Psoas muscle (tissue), 8 donors: ENCODE measurements at regions of chr16 and their contacts with region 1.

Region 1: GRCh38 chr16:79601931-79602627 is 1.5 kb upstream of the MAF start:
- DNase-seq: peak; percentile 78 to 86
- ATAC-seq: peak in 3 of 4 donors; percentile 18 to 48 (median 23)
- H3K4me3 ChIP-seq: peak overlapping the region; percentile 80
- H3K27ac ChIP-seq: peak overlapping the region; percentile 94
- H3K4me1 ChIP-seq: peaks cover 13% of the 10 kb centered on the region
- H3K27me3 ChIP-seq: no peaks in the 10 kb centered on the region
- CTCF ChIP-seq: peak; percentile 79

Region 2: GRCh38 chr16:78503602-78504001 is 1098.5 kb before region 1 on chr16:
- intact Hi-C with region 1: loop called (anchors 5 kb)
- DNase-seq: no peak
- ATAC-seq: peak; percentile 48 to 69 (median 54)
- H3K4me3 ChIP-seq: no peak overlapping the region
- H3K27ac ChIP-seq: no peak overlapping the region
- H3K4me1 ChIP-seq: peaks cover 23% of the 10 kb centered on the region
- H3K27me3 ChIP-seq: no peaks in the 10 kb centered on the region
- CTCF ChIP-seq: peak; percentile 96

Region 3: GRCh38 chr16:78925083-78925767 is 676.9 kb before region 1 on chr16:
- intact Hi-C with region 1: loop called (anchors 5 to 10 kb)
- DNase-seq: peak; percentile 26 to 70
- ATAC-seq: peak; percentile 58 to 74 (median 66)
- H3K4me3 ChIP-seq: no peak overlapping the region
- H3K27ac ChIP-seq: no peak overlapping the region
- H3K4me1 ChIP-seq: no peaks in the 10 kb centered on the region
- H3K27me3 ChIP-seq: no peaks in the 10 kb centered on the region
- CTCF ChIP-seq: peak; percentile 54

Region 4: GRCh38 chr16:79316004-79316458 is 286.0 kb before region 1 on chr16:
- intact Hi-C with region 1: loop called in 1 of 2 experiments (anchors 5 kb)
- DNase-seq: no peak
- ATAC-seq: no peak
- H3K4me3 ChIP-seq: no peak overlapping the region
- H3K27ac ChIP-seq: no peak overlapping the region
- H3K4me1 ChIP-seq: peaks cover 16% of the 10 kb centered on the region
- H3K27me3 ChIP-seq: no peaks in the 10 kb centered on the region
- CTCF ChIP-seq: no peak

Region 5: DNA sequence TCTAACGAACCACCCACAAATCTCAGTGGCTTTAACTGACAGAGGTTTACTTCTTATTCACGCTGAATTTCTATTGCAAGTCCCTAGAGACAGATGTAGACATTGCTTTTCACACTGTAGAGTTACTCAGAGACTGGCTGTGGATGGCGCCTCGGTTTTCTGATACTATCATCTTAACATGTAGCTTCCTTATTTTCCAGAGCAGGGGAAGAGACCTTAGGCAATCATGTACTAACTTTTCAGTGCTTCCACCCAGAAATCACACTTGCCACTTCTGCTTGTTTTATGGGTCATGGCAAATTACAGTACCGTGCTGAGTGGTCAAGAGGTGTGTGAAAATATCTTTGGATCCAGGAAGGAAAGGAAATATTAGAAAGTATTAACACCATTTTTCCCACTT is 66.9 kb before region 1 on chr16:
- intact Hi-C with region 1: loop called in 1 of 2 experiments (anchors 1 kb)
- DNase-seq: no peak
- ATAC-seq: no peak
- H3K4me3 ChIP-seq: no peak overlapping the region
- H3K27ac ChIP-seq: peak overlapping the region; percentile 89
- H3K4me1 ChIP-seq: peaks cover 36% of the 10 kb centered on the region
- H3K27me3 ChIP-seq: no peaks in the 10 kb centered on the region
- CTCF ChIP-seq: no peak

Region 6: DNA sequence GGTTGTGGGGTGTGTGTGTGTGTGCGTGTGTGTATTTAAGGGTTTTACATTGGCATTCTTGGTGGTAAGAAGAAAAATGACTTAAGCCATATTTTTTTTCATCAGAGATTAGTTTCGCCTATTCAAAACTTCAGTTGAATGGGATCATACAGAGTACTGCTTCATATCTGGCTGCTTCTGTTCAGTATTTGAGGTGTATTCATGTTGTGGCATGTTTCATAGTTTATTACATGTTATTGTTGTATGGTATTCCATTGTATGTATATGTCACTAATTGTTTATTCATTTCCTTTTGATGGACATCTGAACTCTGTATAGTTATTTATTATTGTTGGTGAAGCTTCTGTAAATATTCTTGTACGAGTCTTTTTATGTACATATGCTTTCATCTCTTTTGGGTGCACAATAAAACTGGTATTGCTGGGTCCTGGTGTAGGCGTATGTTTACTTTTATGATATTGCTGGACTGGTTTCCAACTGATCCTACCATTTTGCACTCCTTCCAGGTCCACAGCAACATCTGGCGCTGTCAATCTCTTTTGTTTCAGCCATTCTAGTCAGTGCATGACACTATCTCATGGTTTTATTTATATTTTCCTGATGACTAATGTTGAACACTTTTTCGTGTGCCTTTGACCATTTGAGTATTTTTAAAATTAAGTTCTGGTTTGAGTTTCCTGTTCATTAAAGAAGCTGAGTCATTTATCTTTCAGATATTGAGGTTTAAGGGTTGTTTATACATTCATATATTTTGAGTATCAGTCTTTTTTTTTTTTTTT is 75.9 kb after region 1 on chr16:
- intact Hi-C with region 1: no loop called
- DNase-seq: no peak
- ATAC-seq: no peak
- H3K4me3 ChIP-seq: no peak overlapping the region
- H3K27ac ChIP-seq: no peak overlapping the region
- H3K4me1 ChIP-seq: no peaks in the 10 kb centered on the region
- H3K27me3 ChIP-seq: peaks cover 0 to 1% (median 0%) of the 10 kb centered on the region in 3 donors
- CTCF ChIP-seq: no peak

Region 7: DNA sequence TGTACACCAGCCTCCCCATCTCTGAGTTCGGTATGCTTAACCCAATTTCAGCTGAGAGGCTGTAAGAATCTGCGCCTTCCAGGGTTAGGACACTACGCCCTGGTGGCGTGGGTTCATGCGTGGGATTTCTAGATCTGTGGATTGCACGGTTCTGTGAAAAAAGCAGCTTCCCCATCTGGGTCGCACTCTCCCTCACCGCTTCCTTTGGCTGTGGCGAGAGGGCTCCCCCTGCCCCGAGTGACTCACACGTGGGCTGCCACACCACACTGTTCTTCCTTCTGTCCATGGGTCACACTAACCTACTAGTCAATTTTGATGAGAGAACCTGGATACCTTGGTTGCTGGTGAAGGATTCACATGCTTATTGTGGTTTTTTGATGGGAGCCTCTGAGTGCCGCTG is 254.5 kb after region 1 on chr16:
- intact Hi-C with region 1: no loop called
- DNase-seq: no peak
- ATAC-seq: no peak
- H3K4me3 ChIP-seq: no peak overlapping the region
- H3K27ac ChIP-seq: no peak overlapping the region
- H3K4me1 ChIP-seq: no peaks in the 10 kb centered on the region
- H3K27me3 ChIP-seq: no peaks in the 10 kb centered on the region
- CTCF ChIP-seq: no peak

Region 8: DNA sequence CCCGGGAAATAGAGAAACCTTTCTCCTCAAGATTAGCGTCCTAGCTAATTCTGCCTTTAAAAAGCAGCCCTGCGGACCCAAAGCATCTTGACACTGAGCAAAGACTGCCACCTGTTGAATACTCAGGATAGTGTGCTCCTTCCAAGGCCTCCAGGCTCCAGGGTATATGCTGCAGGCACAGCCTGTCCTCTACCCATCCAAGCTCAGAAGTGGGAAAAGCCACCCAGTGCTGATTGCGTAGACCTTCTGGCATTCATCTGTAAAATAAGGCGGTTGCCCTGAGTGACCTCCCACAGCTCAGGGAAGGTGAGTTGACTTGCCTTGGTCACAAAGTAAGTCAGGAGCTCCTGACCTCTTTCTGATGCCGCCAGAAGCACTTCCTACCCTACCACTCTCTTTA is 482.6 kb after region 1 on chr16:
- intact Hi-C with region 1: loop called in 1 of 2 experiments (anchors 5 kb)
- DNase-seq: peak; percentile 13 to 50
- ATAC-seq: peak; percentile 67 to 89 (median 78)
- H3K4me3 ChIP-seq: no peak overlapping the region
- H3K27ac ChIP-seq: no peak overlapping the region
- H3K4me1 ChIP-seq: no peaks in the 10 kb centered on the region
- H3K27me3 ChIP-seq: no peaks in the 10 kb centered on the region
- CTCF ChIP-seq: peak; percentile 61